Breast epithelium (tissue), 4 donors: ENCODE measurements at regions of chr2 and their contacts with region 1.

Region 1: GRCh38 chr2:222594679-222595078 is 61.2 kb downstream of the FARSB start:
- DNase-seq: no peak
- H3K4me3 ChIP-seq: no peak overlapping the region
- H3K27ac ChIP-seq: no peak overlapping the region
- H3K4me1 ChIP-seq: no peaks in the 10 kb centered on the region
- H3K27me3 ChIP-seq: no peaks in the 10 kb centered on the region
- CTCF ChIP-seq: no peak
- POLR2A ChIP-seq: no peak

Region 2: GRCh38 chr2:223243233-223243632 is 648.6 kb after region 1 on chr2:
- intact Hi-C with region 1: loop called (anchors 5 kb)
- DNase-seq: no peak
- H3K4me3 ChIP-seq: no peak overlapping the region
- H3K27ac ChIP-seq: no peak overlapping the region
- H3K4me1 ChIP-seq: no peaks in the 10 kb centered on the region
- H3K27me3 ChIP-seq: no peaks in the 10 kb centered on the region
- CTCF ChIP-seq: no peak
- POLR2A ChIP-seq: no peak